ENCODE measurements at regions of chr1 and their contacts with region 1.

Region 1: GRCh38 chr1:109282952-109283747 is at the start of gene PSRC1:
- DNase-seq: peak; percentile 94
- ATAC-seq: peak; percentile 91
- H3K4me3 Mint-ChIP-seq: peak within 1 kb of the TSS; percentile 100
- H3K27ac Mint-ChIP-seq: peak within 1 kb of the TSS; percentile 96
- H3K4me1 Mint-ChIP-seq: peaks cover 20% of the 10 kb centered on the region
- H3K27me3 Mint-ChIP-seq: peaks cover 7% of the 10 kb centered on the region
- total RNA-seq, gene PSRC1: 27.9 to 30.5 TPM

Region 2: DNA sequence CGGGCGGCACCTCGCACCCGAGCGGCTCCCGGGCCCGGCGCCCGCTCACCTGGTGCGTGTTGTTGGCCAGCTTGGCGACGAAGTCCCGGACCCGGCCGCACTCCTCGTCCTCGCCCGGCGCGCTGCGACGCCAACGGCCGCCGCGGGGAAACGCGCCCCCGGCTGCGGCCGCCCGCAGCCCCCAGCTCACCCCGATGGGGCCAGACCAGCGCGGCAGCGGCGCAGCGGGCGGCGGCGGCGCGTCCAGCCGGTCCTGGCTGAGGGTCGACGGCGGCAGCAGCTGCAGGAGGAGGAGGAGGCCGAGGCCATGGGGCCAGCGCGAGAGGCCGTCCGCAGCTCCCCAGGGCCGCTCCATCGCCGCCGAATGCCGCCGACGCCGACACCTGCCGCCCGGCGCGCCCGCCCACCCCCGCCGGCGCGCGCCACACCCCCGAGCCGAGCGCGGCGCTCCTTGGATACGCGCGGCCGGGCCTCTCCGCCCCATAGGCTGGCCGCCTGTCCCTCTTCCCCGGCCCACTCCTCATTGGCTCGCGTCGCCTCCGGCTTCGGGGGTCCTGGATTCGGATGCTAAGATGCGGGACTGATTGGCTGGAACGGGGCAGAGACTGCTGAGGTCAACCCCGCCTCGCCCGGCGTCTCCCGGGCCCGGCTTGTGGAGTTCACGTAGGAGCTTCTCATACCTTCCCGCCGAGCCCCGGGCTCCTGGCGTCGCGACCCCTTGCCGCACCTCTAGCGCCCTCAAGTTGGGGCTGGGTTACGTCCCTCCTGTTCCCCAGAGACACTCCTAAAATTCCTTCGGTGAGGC is 114.6 kb after region 1 on chr1 and contains the start of gene SORT1:
- POLR2A ChIA-PET with region 1: interaction called, 22 read pairs
- DNase-seq: peak; percentile 82
- ATAC-seq: peak; percentile 98
- H3K4me3 Mint-ChIP-seq: peak within 1 kb of the TSS; percentile 87
- H3K27ac Mint-ChIP-seq: no peak within 1 kb of the TSS
- H3K4me1 Mint-ChIP-seq: peaks cover 30% of the 10 kb centered on the region
- H3K27me3 Mint-ChIP-seq: peaks cover 32% of the 10 kb centered on the region
- total RNA-seq, gene SORT1: 6.5 to 11.0 TPM

Region 3: GRCh38 chr1:109426278-109427170 is 143.4 kb after region 1 on chr1 and contains the start of gene PSMA5:
- POLR2A ChIA-PET with region 1: interaction called, 12 read pairs
- DNase-seq: peak; percentile 89
- ATAC-seq: peak; percentile 93
- H3K4me3 Mint-ChIP-seq: peak within 1 kb of the TSS; percentile 93
- H3K27ac Mint-ChIP-seq: peak within 1 kb of the TSS; percentile 97
- H3K4me1 Mint-ChIP-seq: peaks cover 27% of the 10 kb centered on the region
- H3K27me3 Mint-ChIP-seq: no peaks in the 10 kb centered on the region
- total RNA-seq, gene PSMA5: 135 TPM

Measured in activated naive CD8-positive, alpha-beta T cell treated with anti-CD3 and anti-CD28 coated beads, Interleukin-2, amount 10 ng/mL, durations not matched to agents 7 days and 5 days (primary cell).